H1 (cell line): ENCODE measurements at regions of chr14 and their contacts with region 1.

Region 1: GRCh38 chr14:87745507-87746118 is 247.4 kb downstream of the GALC start:
- DNase-seq: peak; percentile 17 to 63
- H3K4me3 ChIP-seq: no peak overlapping the region
- H3K27ac ChIP-seq: no peak overlapping the region
- H3K4me1 ChIP-seq: no peaks in the 10 kb centered on the region
- H3K27me3 ChIP-seq: no peaks in the 10 kb centered on the region
- CTCF ChIP-seq: peak; percentile 72 to 89 (median 86)
- EP300 ChIP-seq: no peak
- POLR2A ChIP-seq: no peak
- RAD21 ChIP-seq: peak; percentile 63 to 70

Region 2: GRCh38 chr14:87732562-87732961 is 13.1 kb before region 1 on chr14:
- CTCF ChIA-PET with region 1: interaction called, 61 read pairs
- POLR2A ChIA-PET with region 1: no interaction called
- DNase-seq: no peak
- H3K4me3 ChIP-seq: no peak overlapping the region
- H3K27ac ChIP-seq: no peak overlapping the region
- H3K4me1 ChIP-seq: no peaks in the 10 kb centered on the region
- H3K27me3 ChIP-seq: no peaks in the 10 kb centered on the region
- CTCF ChIP-seq: no peak
- EP300 ChIP-seq: no peak
- POLR2A ChIP-seq: no peak
- RAD21 ChIP-seq: no peak

Region 3: DNA sequence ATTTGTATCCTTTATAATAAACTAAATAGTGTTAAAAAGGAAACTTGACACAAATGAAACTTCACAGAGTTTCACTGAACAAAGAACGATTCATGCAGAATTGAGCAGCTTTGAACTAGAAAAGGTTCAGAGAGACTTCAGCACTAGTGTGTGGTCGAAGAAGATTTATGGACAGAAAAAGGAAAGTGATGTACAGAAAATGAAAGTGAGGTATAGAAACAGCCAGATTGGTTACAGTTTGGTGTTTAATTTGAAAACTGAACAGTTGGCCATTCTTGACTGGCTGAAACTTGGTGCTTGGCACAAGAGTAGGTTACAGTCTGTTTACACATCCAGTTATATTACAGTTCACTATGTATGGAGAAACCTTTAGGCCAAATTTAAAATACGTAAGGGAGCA is 40.3 kb after region 1 on chr14:
- CTCF ChIA-PET with region 1: interaction called, 14 read pairs
- POLR2A ChIA-PET with region 1: no interaction called
- DNase-seq: no peak
- H3K4me3 ChIP-seq: no peak overlapping the region
- H3K27ac ChIP-seq: no peak overlapping the region
- H3K4me1 ChIP-seq: no peaks in the 10 kb centered on the region
- H3K27me3 ChIP-seq: no peaks in the 10 kb centered on the region
- CTCF ChIP-seq: no peak
- EP300 ChIP-seq: no peak
- POLR2A ChIP-seq: no peak
- RAD21 ChIP-seq: no peak

Region 4: DNA sequence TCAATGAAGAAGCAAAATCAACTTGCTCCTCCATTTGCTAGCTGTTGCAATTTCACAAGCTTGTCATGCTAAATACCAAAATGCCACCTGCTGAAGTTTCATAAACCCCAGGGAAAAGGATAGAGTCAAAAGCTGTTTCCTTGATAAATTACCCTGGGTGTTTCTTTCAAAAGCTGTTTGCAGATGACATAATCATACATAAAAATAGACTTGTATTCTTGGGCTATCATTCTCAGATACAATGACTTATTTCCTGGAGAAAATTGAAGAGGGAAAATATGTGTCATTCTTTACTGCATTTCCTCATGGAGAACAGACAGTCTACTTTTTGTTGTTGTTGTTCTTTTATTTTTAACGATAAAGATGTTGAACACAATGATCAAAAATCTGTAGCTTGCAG is 128.1 kb after region 1 on chr14:
- CTCF ChIA-PET with region 1: interaction called, 13 read pairs
- POLR2A ChIA-PET with region 1: no interaction called
- DNase-seq: no peak
- H3K4me3 ChIP-seq: no peak overlapping the region
- H3K27ac ChIP-seq: no peak overlapping the region
- H3K4me1 ChIP-seq: no peaks in the 10 kb centered on the region
- H3K27me3 ChIP-seq: no peaks in the 10 kb centered on the region
- CTCF ChIP-seq: no peak
- EP300 ChIP-seq: no peak
- POLR2A ChIP-seq: no peak
- RAD21 ChIP-seq: no peak